Psoas muscle (tissue), 8 donors: ENCODE measurements at regions of chr10 and their contacts with region 1.

Region 1: GRCh38 chr10:35336084-35336831 is at the start of gene CCNY:
- DNase-seq: peak; percentile 85 to 88
- ATAC-seq: peak; percentile 77 to 81 (median 79)
- H3K4me3 ChIP-seq: peak within 1 kb of the TSS; percentile 97
- H3K27ac ChIP-seq: peak within 1 kb of the TSS; percentile 92
- H3K4me1 ChIP-seq: peaks cover 67% of the 10 kb centered on the region
- H3K27me3 ChIP-seq: no peaks in the 10 kb centered on the region
- CTCF ChIP-seq: no peak
- total RNA-seq, gene CCNY: 47.0 to 55.8 (median 50.5) TPM

Region 2: GRCh38 chr10:35379226-35380137 is 43.2 kb after region 1 on chr10:
- intact Hi-C with region 1: loop called in 1 of 2 experiments (anchors 5 kb)
- DNase-seq: peak in 1 of 2 donors; percentile 67
- ATAC-seq: peak; percentile 32 to 56 (median 46)
- H3K4me3 ChIP-seq: no peak overlapping the region
- H3K27ac ChIP-seq: peak overlapping the region; percentile 75
- H3K4me1 ChIP-seq: peaks cover 71% of the 10 kb centered on the region
- H3K27me3 ChIP-seq: no peaks in the 10 kb centered on the region
- CTCF ChIP-seq: no peak

Region 3: GRCh38 chr10:35563261-35563891 is 227.1 kb after region 1 on chr10:
- intact Hi-C with region 1: loop called (anchors 5 kb)
- DNase-seq: peak; percentile 50 to 66
- ATAC-seq: peak; percentile 36 to 72 (median 56)
- H3K4me3 ChIP-seq: no peak overlapping the region
- H3K27ac ChIP-seq: no peak overlapping the region
- H3K4me1 ChIP-seq: peaks cover 41% of the 10 kb centered on the region
- H3K27me3 ChIP-seq: no peaks in the 10 kb centered on the region
- CTCF ChIP-seq: peak; percentile 92

Region 4: DNA sequence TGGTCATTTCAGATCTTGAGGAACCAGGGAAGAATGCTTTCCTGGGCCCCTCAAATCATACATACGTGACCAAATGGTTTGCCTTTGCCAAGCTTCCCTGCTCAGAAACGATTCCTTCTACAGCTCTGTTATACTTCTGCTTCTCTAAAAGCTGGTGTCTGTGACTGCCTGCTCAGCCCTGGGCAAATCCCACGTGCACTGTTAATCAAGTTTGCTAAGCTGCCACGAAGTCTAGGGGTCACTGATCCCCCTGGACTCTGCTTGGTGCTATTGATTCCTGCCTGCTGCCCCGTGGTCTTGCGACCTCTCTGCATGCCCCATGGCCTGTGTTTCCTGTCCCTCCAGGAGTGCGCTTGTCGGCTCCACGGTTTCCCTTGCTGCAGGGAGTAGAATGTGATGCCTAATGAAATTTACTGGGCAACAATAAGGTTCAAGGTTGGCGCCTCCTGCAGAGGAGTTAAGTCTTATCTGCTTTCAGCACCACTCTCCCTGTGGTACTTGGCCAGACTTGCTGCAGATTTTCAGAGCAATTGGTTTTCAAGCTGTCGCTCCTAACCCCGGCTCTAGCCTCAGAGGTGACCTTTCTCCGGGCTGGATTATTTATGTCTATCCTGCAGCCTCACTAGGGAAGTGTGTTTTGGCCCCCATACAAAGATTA is 507.4 kb after region 1 on chr10:
- intact Hi-C with region 1: no loop called
- DNase-seq: peak in 1 of 2 donors; percentile 39
- ATAC-seq: peak in 1 of 4 donors; percentile 25
- H3K4me3 ChIP-seq: no peak overlapping the region
- H3K27ac ChIP-seq: no peak overlapping the region
- H3K4me1 ChIP-seq: no peaks in the 10 kb centered on the region
- H3K27me3 ChIP-seq: no peaks in the 10 kb centered on the region
- CTCF ChIP-seq: no peak